ENCODE measurements at regions of chr6 and their contacts with region 1.

Region 1: GRCh38 chr6:44655412-44656342 is 268.2 kb downstream of the CDC5L start:
- DNase-seq: peak; percentile 63
- ATAC-seq: peak; percentile 90
- H3K4me3 ChIP-seq: no peak overlapping the region
- H3K27ac ChIP-seq: no peak overlapping the region
- H3K4me1 ChIP-seq: peaks cover 14% of the 10 kb centered on the region
- H3K27me3 ChIP-seq: peaks cover 0 to 24% of the 10 kb centered on the region in 2 experiments; a peak in 3 of 5 replicates
- CTCF ChIP-seq: peak; percentile 98
- EP300 ChIP-seq: no peak
- POLR2A ChIP-seq: no peak
- RAD21 ChIP-seq: peak; percentile 95

Region 2: GRCh38 chr6:44667668-44668390 is 12.2 kb after region 1 on chr6:
- CTCF ChIA-PET with region 1: no interaction called
- POLR2A ChIA-PET with region 1: no interaction called
- in situ Hi-C with region 1: no loop called
- intact Hi-C with region 1: no loop called
- DNase-seq: peak; percentile 39
- ATAC-seq: peak; percentile 86
- H3K4me3 ChIP-seq: no peak overlapping the region
- H3K27ac ChIP-seq: no peak overlapping the region
- H3K4me1 ChIP-seq: peaks cover 10% of the 10 kb centered on the region; the same call in 1 of the 2 replicates
- H3K27me3 ChIP-seq: peaks cover 2 to 22% of the 10 kb centered on the region in 2 experiments; a peak in 3 of 5 replicates
- CTCF ChIP-seq: peak; percentile 72
- EP300 ChIP-seq: no peak
- POLR2A ChIP-seq: no peak
- RAD21 ChIP-seq: 0 out of 2 replicates have a peak, but pooled peaks have one; percentile 17

Region 3: DNA sequence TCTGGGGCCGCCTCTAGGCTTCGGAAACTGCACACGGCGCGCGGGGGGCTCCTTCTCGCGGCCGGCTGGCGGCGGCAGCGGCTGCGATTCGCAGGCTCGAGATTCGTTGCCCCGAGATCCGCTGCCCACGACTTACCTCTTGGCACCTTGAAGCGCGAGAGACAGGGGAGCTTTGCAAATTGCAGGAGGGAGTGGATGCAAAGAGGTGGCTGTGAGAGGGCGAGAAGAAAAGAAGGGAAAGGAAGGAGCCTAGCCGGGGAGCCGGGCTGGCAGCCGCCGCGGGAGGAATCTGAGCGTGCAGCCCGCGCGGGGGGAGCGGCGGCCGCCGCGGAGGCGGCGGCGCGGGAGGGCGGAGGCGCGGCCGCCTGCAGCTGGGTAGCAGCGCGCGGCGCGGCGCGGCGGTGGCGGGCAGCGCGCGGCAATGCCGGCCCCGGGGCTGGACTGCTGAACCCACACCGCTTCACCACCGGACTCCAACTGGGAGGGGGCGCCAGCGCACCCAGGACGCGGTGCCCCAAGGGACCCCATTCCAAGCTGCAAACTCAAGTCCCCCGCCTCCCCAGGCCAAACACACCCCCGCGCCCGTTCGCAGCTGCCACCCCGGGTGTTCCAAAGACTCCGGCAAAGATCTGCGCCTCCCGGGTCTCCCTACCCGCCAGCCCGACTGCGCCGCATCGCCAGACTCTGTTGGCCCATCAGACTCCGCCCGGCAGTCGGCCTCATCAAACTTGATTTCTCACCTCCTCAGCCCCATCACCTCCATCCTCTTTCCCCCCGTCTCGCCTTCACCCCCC is 766.2 kb after region 1 on chr6:
- CTCF ChIA-PET with region 1: interaction called, 4 read pairs
- POLR2A ChIA-PET with region 1: no interaction called
- in situ Hi-C with region 1: loop called (anchors 5 kb)
- intact Hi-C with region 1: loop called (anchors 1 kb)
- DNase-seq: peak; percentile 16
- ATAC-seq: peak; percentile 83
- H3K4me3 ChIP-seq: peak overlapping the region; percentile 64 to 78 (median 66)
- H3K27ac ChIP-seq: no peak overlapping the region
- H3K4me1 ChIP-seq: peaks cover 24% of the 10 kb centered on the region
- H3K27me3 ChIP-seq: peaks cover 20 to 62% of the 10 kb centered on the region in 2 experiments
- CTCF ChIP-seq: peak; percentile 45
- EP300 ChIP-seq: no peak
- POLR2A ChIP-seq: no peak
- RAD21 ChIP-seq: no peak

Region 4: GRCh38 chr6:45922728-45923351 is 1267.2 kb after region 1 on chr6:
- CTCF ChIA-PET with region 1: interaction called, 5 read pairs
- POLR2A ChIA-PET with region 1: no interaction called
- in situ Hi-C with region 1: loop called (anchors 25 kb)
- intact Hi-C with region 1: no loop called
- DNase-seq: no peak
- ATAC-seq: peak; percentile 46; the same call in 1 of the 3 replicates
- H3K4me3 ChIP-seq: no peak overlapping the region
- H3K27ac ChIP-seq: no peak overlapping the region
- H3K4me1 ChIP-seq: no peaks in the 10 kb centered on the region
- H3K27me3 ChIP-seq: no peaks in the 10 kb centered on the region; a peak in 1 of 5 replicates
- CTCF ChIP-seq: peak; percentile 70
- EP300 ChIP-seq: no peak
- POLR2A ChIP-seq: no peak
- RAD21 ChIP-seq: peak; percentile 29; the same call in 1 of the 2 replicates

Region 5: GRCh38 chr6:45946352-45946751 is 1290.7 kb after region 1 on chr6:
- CTCF ChIA-PET with region 1: no interaction called
- POLR2A ChIA-PET with region 1: no interaction called
- in situ Hi-C with region 1: no loop called
- intact Hi-C with region 1: loop called (anchors 1 kb)
- DNase-seq: peak; percentile 25
- ATAC-seq: peak; percentile 92
- H3K4me3 ChIP-seq: no peak overlapping the region
- H3K27ac ChIP-seq: no peak overlapping the region
- H3K4me1 ChIP-seq: no peaks in the 10 kb centered on the region
- H3K27me3 ChIP-seq: no peaks in the 10 kb centered on the region; a peak in 2 of 5 replicates
- CTCF ChIP-seq: peak; percentile 48
- EP300 ChIP-seq: no peak
- POLR2A ChIP-seq: no peak
- RAD21 ChIP-seq: no peak

Measured in HepG2 (cell line).